A549 (cell line): ENCODE measurements at regions of chr5 and their contacts with region 1.

Region 1: DNA sequence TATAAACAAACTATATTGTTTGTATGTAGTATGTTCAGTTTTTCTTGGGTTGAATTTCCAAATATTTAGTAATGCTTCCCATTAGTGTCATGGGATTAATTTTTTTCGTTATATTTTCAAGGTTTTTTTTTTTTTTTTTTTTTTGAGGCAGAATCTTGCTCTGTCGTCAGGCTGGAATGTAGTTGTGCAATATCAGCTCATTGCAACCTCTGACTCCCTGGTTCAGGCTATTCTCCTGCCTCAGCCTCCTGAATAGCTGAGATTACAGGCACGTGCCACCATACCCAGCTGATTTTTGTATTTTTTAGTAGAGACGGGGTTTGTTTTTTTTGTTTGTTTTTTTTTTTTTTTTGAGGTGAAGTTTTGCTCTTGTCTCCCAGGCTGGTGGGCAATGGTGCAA is 10.6 kb downstream of the DDX46 start:
- DNase-seq: peak in 1 of 2 experiments; percentile 13
- ATAC-seq: peak in 1 of 2 experiments; percentile 58; a peak in 1 of 6 replicates
- H3K4me3 ChIP-seq: no peak overlapping the region
- H3K27ac ChIP-seq: no peak overlapping the region
- H3K4me1 ChIP-seq: no peaks in the 10 kb centered on the region
- CTCF ChIP-seq: no peak
- EP300 ChIP-seq: no peak
- POLR2A ChIP-seq: no peak
- RAD21 ChIP-seq: no peak

Region 2: DNA sequence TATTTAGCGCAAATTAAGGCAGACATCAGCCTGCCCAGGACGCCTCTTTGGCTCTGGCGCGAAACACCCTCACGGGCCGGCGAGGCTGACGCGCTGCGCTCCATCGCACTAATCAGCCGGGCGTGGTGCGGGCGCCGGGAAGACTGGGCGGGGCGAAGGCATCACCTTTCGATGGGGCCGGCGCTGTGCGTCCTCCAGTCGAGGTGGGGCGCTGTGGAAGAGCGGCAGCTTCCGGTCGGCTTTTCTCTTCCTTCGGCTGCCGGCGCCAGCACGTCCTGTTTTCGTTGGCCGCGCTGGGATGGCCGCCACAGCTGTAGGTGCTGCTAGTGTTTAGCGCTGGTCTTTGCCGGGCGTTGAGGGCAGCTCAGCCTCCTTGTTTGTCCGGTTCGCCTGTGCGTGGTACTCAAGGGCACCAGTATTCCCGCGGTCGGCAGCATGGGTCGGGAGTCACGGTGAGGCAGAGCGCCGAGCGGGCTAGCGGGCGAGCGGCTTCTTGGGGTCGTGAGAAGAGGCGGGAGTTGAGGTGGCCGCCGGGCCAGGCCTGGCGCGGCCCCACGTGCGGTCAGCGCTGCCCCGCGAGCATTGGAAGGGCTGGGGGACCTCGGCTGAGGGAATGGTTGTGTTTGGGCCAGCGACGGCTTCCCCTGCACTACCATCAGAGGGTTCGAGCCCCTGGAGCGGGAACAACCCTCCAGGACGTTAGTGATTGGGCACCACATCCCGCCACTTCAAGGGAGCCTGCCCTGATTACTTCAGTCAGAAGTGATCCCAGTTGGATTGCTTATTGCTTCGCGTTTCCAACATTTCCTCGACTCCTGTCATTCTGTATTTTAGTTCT is 10.5 kb before region 1 on chr5 and contains the start of gene DDX46:
- CTCF ChIA-PET with region 1: interaction called, 10 read pairs
- POLR2A ChIA-PET with region 1: interaction called, 10 read pairs
- DNase-seq: peak; percentile 94 to 95
- ATAC-seq: peak; percentile 98 to 99
- H3K4me3 ChIP-seq: peak within 1 kb of the TSS; percentile 99
- H3K27ac ChIP-seq: peak within 1 kb of the TSS; percentile 93
- H3K4me1 ChIP-seq: peaks cover 14% of the 10 kb centered on the region
- CTCF ChIP-seq: peak; percentile 74
- EP300 ChIP-seq: no peak
- POLR2A ChIP-seq: peak; percentile 84
- RAD21 ChIP-seq: no peak
- polyA plus RNA-seq, gene DDX46: 74.7 and 104 TPM in 2 replicates

Region 3: DNA sequence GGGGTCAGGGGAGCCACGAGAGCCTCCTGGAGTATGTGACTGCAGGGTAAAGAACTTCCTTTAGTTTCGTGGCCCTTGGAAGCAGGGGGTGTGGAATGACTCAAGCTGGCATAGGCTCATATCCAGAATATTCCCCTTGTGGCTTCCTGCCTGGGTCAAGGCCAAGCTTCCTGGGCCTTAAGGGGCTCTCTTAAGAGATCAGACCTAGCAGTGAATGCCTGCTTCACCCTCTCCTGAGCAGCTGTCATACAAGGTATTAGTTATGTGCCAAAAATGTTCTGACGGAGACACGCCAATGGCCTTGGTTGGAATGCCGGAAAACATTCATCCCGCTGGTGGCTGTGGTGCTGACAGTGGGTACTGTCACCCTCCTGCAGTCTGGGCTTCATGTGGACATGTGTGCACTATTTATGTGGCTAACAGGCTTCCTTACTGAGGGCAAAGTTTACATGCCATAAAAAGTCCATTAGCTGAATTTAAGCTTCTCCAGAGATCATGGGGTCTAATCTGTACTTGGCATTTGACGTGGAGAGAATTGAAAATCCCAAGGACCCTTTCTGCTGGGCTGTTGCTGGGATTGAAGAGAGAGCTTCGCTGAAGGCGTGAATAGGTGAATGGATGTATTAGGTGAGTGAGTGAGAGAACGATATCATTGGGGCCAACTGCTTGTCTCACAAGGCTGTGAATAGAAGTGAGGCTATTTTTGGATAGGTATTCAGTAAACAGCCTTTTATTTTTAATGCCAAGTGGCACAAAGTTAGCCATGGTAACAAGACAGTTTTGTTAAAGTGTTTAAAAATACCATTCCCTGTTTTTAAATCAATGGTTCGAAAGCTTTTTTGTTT is 473.0 kb after region 1 on chr5:
- CTCF ChIA-PET with region 1: no interaction called
- POLR2A ChIA-PET with region 1: no interaction called
- DNase-seq: no peak
- ATAC-seq: no peak
- H3K4me3 ChIP-seq: no peak overlapping the region
- H3K27ac ChIP-seq: peak overlapping the region; percentile 3 to 93; a peak in 4 of 6 replicates
- H3K4me1 ChIP-seq: peaks cover 43% of the 10 kb centered on the region
- CTCF ChIP-seq: no peak
- EP300 ChIP-seq: no peak
- POLR2A ChIP-seq: no peak
- RAD21 ChIP-seq: no peak